ENCODE measurements at regions of chr11 and their contacts with region 1.

Region 1: DNA sequence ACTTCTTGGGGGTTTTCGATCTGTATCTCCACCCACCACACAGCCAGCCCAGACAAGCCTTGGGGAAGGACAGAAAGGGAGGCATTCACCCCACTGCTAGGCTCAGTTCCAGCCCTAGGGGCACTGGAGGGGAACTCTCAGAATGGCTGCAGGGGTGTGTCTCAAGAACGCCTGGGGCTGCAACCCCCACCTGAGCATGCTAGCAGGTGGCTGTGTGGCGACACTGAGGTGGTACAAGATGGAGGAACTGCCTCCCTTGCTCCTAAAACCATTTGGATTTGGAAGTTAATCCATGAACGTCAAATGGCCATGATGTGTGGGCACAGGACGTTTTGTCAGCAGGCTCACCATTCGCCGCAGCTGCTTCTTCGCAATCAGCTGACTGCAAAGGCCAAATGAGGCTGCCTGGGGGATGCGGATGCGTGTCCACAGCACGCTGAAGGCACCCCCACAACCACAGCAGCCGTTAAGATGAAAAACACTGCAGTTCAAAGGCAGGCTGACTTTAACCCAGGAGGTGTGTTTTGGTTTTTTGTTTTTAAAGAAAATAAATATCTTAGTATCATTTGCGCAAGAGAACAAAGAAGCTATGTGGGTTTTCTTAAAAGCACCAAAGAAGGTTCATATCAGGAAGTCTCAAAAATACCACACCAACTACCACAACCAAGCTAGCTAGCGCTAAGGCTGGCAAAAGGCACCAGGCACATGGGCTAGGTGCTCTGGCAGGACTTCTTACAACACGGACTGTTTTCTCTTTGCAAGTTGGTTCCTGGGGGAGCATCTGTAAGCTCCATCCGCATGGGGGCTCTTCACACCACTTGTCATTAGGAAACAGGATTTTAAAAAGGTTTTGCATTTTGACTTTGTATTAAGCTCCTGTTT is 22.2 kb upstream of the NAP1L4 start:
- DNase-seq: peak; percentile 93
- H3K4me3 Mint-ChIP-seq: peak overlapping the region; percentile 43
- H3K27ac Mint-ChIP-seq: peak overlapping the region; percentile 97
- H3K4me1 Mint-ChIP-seq: peaks cover 91% of the 10 kb centered on the region
- H3K27me3 Mint-ChIP-seq: no peaks in the 10 kb centered on the region

Region 2: DNA sequence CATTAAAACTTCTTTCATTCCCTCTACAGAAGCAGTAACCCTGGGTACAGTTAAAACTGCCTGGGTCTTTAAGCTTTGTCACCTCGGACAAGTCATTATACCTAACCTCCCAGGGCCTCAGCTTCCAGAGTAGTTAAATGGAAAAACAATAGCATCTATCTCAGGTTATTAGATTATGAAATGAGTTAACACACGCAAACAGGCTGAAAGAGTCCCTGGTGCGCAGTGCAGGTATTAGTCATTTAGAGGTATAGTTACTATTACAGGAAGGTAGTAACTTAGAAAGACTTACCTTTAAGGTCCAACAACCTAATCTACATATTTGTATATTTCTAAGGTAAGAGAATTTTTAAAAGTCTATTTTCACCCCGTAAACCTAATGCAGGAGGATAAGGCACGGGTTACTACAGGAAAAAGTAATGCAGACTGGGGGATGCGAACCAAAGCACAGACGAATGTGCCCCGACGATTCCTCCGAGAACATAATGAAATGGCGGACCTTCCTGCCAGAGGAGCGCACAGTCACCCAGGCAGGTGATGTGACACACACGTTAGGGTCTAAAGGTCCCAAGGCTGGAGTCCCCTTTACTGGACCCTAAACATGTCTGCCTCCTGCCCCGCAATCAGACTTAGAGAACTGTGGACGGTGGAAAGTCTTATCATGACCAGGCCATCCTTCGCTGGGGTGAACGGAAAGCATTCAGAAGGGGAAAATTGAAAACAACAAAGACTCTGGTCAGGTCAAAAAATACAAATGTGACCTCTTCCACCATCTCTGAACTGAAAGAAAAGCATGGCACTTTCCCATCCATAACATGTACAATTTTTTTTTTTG is 23.5 kb before region 1 on chr11:
- CTCF ChIA-PET with region 1: interaction called, 5 read pairs
- POLR2A ChIA-PET with region 1: interaction called, 11 read pairs
- DNase-seq: peak; percentile 47
- H3K4me3 Mint-ChIP-seq: peak overlapping the region; percentile 96
- H3K27ac Mint-ChIP-seq: peak overlapping the region; percentile 97
- H3K4me1 Mint-ChIP-seq: peaks cover 33% of the 10 kb centered on the region
- H3K27me3 Mint-ChIP-seq: no peaks in the 10 kb centered on the region

Region 3: DNA sequence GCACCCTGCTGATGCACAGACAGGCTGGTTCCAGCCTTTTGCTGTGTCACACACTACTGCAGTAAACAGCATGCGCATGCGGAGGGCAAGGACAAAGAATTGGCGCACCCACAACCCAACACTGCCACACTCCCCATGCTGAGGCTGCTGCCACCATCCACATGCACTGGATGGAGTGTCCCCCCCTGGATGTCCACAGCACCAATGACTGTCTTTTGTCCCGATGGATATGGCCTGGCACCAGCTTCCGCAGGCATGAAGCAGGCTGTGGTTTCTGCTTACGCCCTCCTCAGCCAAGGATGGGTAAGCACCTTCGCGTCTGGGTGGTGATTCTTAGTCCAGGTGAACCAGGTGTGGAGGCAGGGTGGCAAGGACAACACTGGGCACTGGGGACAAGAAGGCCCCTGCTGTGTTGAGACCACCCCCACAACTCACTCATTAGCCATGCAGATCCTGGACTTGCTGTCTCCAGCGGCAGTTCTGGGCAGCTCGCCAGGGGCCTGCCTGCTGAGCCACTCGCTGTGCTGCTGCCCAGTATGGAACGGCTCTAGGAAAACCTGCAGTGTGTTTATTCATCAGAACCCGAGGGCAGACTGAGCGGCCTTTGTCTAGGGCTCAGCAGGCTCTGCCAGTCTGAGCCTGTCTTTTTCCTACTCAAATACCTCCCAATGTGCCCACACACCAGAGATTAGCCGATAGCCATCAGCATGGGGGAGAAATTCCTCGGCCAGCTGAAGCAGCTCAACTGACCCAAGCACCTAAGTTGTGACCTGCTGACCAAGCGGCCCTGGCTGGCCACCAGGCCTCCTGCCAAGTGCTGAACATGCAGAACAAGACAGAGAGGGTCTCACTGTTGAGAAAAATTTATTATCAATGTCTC is 14.0 kb before region 1 on chr11:
- CTCF ChIA-PET with region 1: interaction called, 18 read pairs
- POLR2A ChIA-PET with region 1: no interaction called
- DNase-seq: no peak
- H3K4me3 Mint-ChIP-seq: no peak overlapping the region
- H3K27ac Mint-ChIP-seq: no peak overlapping the region
- H3K4me1 Mint-ChIP-seq: no peaks in the 10 kb centered on the region
- H3K27me3 Mint-ChIP-seq: no peaks in the 10 kb centered on the region